ENCODE measurements at regions of chr1 and their contacts with region 1.

Region 1: GRCh38 chr1:26345718-26346549 is 8.0 kb downstream of the CRYBG2 start:
- DNase-seq: no peak
- ATAC-seq: no peak
- H3K4me3 ChIP-seq: no peak overlapping the region
- H3K4me3 Mint-ChIP-seq: no peak overlapping the region
- H3K27ac ChIP-seq: no peak overlapping the region
- H3K27ac Mint-ChIP-seq: no peak overlapping the region
- H3K4me1 ChIP-seq: no peaks in the 10 kb centered on the region
- H3K4me1 Mint-ChIP-seq: no peaks in the 10 kb centered on the region
- H3K27me3 ChIP-seq: peaks cover 0 to 16% of the 10 kb centered on the region in 2 experiments
- H3K27me3 Mint-ChIP-seq: no peaks in the 10 kb centered on the region

Region 2: GRCh38 chr1:26306290-26307229 is 39.4 kb before region 1 on chr1 and contains the start of gene UBXN11:
- CTCF ChIA-PET with region 1: no interaction called
- POLR2A ChIA-PET with region 1: no interaction called
- DNase-seq: peak; percentile 75 to 96 (median 90)
- ATAC-seq: peak; percentile 94 to 98 (median 98)
- H3K4me3 ChIP-seq: peak within 1 kb of the TSS; percentile 74 to 79
- H3K4me3 Mint-ChIP-seq: peak within 1 kb of the TSS; percentile 95 to 99 (median 99)
- H3K27ac ChIP-seq: peak within 1 kb of the TSS; percentile 67
- H3K27ac Mint-ChIP-seq: peak within 1 kb of the TSS; percentile 97 to 99
- H3K4me1 ChIP-seq: peaks cover 28 to 42% of the 10 kb centered on the region in 2 experiments
- H3K4me1 Mint-ChIP-seq: peaks cover 30 to 37% (median 32%) of the 10 kb centered on the region in 3 donors
- H3K27me3 ChIP-seq: no peaks in the 10 kb centered on the region
- H3K27me3 Mint-ChIP-seq: no peaks in the 10 kb centered on the region
- total RNA-seq, gene UBXN11: 39.5 to 112 (median 104) TPM

Region 3: DNA sequence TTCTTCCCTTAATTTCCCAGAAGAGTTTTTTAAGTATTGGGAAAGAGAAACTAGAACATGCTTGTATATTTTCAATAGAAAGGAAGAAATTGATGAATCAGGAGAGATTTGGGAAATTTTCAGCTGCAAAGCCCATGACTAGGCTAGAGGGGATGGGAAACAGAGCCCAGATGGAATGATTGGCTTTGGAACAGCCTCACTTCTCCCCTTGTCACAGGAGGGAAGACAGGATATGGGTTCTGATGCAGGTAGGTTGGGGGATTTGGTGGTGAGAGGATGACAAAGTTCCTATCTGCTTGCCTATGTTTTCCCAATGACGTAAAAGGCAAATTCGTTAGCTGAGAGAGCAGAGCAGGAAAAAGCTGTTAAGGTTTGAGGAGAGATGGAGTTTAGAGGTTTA is 318.9 kb after region 1 on chr1:
- CTCF ChIA-PET with region 1: no interaction called
- POLR2A ChIA-PET with region 1: interaction called in 1 of 2 experiments, 10 read pairs
- DNase-seq: no peak
- ATAC-seq: no peak
- H3K4me3 ChIP-seq: no peak overlapping the region
- H3K4me3 Mint-ChIP-seq: no peak overlapping the region
- H3K27ac ChIP-seq: no peak overlapping the region
- H3K27ac Mint-ChIP-seq: no peak overlapping the region
- H3K4me1 ChIP-seq: no peaks in the 10 kb centered on the region
- H3K4me1 Mint-ChIP-seq: no peaks in the 10 kb centered on the region
- H3K27me3 ChIP-seq: peaks cover 0 to 1% of the 10 kb centered on the region in 2 experiments
- H3K27me3 Mint-ChIP-seq: no peaks in the 10 kb centered on the region